ENCODE measurements at regions of chr1 and their contacts with region 1.

Region 1: DNA sequence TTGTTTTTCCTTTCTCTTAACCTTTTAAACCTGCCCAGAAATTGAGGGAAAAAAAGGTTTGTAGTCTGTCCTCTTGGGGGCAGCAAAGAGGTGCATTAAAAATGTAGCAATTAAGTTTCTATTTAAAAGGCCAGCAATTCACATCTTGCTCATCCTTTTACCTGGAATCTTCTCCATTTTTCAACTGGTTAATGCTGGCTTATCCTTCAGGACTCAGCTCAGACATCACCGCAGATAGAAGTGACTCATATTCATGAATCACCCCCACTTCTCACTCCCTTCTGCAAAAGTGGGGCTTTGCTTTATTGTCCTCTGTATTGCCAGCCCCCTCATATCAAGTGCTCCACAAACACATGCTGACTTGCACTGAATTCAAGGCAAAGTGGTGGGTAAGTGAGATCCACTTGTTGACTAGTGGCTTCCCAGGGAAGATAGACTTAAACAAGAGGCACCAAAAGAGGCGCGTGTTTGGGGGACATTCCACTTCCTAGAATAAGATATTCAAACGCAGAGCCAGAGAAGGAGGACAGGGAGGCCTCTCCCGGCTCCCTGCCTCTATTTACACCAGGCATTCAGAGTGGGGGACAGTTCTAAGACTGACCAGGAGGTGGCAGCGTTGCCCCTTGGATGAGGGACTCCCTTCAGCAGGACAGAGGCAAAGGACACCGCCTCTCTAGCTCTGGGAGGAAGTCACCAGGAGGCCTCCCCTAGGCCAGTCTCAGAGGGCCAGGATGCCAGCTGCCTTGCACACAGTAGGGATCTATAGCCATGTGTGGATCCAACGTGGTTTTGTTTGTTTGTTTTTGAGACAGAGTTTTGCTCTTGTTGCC is 23.2 kb upstream of the ZNF648 start:
- DNase-seq: peak; percentile 94
- H3K4me3 ChIP-seq: no peak overlapping the region
- H3K27ac ChIP-seq: no peak overlapping the region
- H3K4me1 ChIP-seq: no peaks in the 10 kb centered on the region
- H3K27me3 ChIP-seq: no peaks in the 10 kb centered on the region
- CTCF ChIP-seq: peak; percentile 84

Region 2: GRCh38 chr1:182143154-182143657 is 58.5 kb after region 1 on chr1:
- intact Hi-C with region 1: loop called (anchors 2 kb)
- DNase-seq: peak; percentile 97
- H3K4me3 ChIP-seq: no peak overlapping the region
- H3K27ac ChIP-seq: peak overlapping the region; percentile 84
- H3K4me1 ChIP-seq: peaks cover 14% of the 10 kb centered on the region
- H3K27me3 ChIP-seq: no peaks in the 10 kb centered on the region
- CTCF ChIP-seq: peak; percentile 88

Region 3: DNA sequence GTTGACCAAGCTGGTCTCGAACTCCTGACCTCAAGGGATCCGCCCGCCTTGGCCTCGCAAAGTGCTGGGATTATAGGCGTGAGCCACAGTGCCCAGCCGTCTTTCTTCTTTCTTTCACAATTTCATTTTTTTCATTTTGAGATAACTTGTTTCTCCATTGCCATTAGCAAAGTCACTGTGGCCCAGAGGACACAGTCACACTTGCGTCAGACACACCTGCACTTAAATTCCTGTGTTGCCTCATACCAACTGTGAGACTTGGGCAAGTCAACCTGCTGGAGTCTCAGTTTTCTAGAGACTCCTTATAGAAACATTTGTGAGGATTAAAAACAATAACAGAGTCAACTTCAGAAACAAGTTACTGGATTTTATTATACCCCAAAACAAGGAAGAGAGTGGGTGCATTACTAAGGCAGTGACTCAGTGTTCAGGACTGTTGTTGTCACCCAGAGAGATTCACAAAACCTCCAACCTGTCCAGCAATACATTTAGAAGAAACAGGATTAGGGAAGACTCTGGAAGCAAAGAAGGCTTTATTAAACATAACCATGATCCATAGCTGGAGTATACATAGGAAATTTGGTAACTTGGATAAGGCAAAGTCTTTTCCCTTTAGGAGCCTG is 313.2 kb after region 1 on chr1:
- intact Hi-C with region 1: loop called (anchors 2 kb)
- DNase-seq: no peak
- H3K4me3 ChIP-seq: no peak overlapping the region
- H3K27ac ChIP-seq: no peak overlapping the region
- H3K4me1 ChIP-seq: no peaks in the 10 kb centered on the region
- H3K27me3 ChIP-seq: no peaks in the 10 kb centered on the region
- CTCF ChIP-seq: no peak

Region 4: GRCh38 chr1:182595641-182596240 is 511.0 kb after region 1 on chr1:
- intact Hi-C with region 1: loop called (anchors 10 kb)
- DNase-seq: peak; percentile 81
- H3K4me3 ChIP-seq: no peak overlapping the region
- H3K27ac ChIP-seq: no peak overlapping the region
- H3K4me1 ChIP-seq: no peaks in the 10 kb centered on the region
- H3K27me3 ChIP-seq: no peaks in the 10 kb centered on the region
- CTCF ChIP-seq: peak; percentile 85

Region 5: GRCh38 chr1:182781841-182782586 is 697.3 kb after region 1 on chr1:
- intact Hi-C with region 1: loop called (anchors 5 kb)
- DNase-seq: peak; percentile 56
- H3K4me3 ChIP-seq: no peak overlapping the region
- H3K27ac ChIP-seq: no peak overlapping the region
- H3K4me1 ChIP-seq: no peaks in the 10 kb centered on the region
- H3K27me3 ChIP-seq: no peaks in the 10 kb centered on the region
- CTCF ChIP-seq: peak; percentile 47

Measured in colonic mucosa (tissue), 4 donors.